ENCODE measurements at regions of chr1 and their contacts with region 1.

Region 1: GRCh38 chr1:17439250-17440073 is at the start of gene RCC2:
- DNase-seq: no peak
- H3K4me3 ChIP-seq: peak within 1 kb of the TSS; percentile 72
- CTCF ChIP-seq: no peak

Region 2: DNA sequence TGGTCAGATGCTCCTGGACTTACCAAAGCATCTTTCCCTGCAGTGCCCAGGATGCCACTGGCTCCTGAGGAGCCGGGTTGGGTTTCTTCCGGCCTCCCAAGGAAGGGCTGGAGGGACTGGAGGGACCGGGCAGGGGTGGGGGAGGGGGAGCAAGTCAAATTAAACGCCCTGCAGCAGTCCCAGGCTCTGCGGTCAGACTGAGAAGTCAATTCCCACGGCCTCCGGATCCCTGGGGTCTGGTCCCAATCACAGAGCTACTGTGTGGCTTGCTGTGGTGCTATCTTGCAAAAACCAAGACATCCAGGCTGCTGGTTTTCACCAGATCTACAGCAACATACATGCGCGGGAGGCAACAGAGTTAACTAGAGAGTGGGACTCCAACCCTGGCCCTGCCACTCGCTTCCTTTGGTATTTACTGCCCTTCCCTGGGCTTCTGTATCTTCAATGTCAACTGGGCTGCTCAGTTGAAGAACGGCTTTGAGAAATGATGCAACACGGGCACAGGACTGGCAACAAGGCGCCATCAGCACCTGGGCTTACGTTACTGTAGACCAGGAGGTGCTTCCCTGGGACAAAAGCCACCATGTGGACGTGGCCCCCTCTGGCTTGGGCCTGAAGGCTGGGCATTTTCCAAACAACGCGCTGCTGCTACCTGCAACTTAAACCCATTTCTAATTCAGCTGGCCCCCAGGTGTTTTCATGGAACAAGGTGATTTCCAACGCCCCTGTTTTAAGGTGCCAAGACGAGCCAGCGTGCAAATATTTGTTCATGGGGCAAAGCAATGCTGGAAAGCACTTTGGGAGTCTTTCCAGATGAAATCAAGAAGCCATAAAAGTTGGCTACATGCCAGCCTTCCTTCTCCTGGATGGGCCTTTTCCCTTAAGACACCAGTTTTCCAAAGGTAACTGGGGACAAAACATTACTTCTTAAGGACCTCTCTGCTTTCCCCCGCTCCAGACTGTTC is 11.5 kb before region 1 on chr1:
- CTCF ChIA-PET with region 1: interaction called, 11 read pairs
- POLR2A ChIA-PET with region 1: interaction called, 3 read pairs
- DNase-seq: no peak
- H3K4me3 ChIP-seq: no peak overlapping the region
- CTCF ChIP-seq: no peak

Region 3: DNA sequence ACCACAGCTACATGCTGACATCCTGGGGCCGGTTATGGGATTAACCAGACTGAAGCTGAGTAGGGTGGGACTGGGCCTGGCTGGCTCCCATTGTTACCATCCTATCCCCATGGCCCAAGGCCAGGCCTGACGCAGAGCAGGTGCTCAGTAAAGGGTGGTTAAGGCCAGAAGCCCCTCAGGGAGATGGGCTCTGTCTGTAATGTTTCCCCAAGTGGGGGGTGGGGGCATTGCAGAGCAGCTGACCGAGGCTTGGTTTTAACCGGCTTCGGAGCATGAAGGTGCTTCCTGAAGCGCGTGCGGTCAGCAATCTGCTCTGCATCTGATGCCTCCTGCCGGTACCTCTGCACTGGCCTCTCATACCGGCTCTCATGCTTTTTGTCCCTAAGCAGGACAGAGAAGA is 232.3 kb after region 1 on chr1:
- CTCF ChIA-PET with region 1: no interaction called
- POLR2A ChIA-PET with region 1: no interaction called
- DNase-seq: no peak
- H3K4me3 ChIP-seq: no peak overlapping the region
- CTCF ChIP-seq: no peak

Region 4: GRCh38 chr1:17732475-17732874 is 293.0 kb after region 1 on chr1:
- CTCF ChIA-PET with region 1: no interaction called
- POLR2A ChIA-PET with region 1: no interaction called
- DNase-seq: peak; percentile 4
- H3K4me3 ChIP-seq: no peak overlapping the region
- CTCF ChIP-seq: no peak

Measured in AG04449 (cell line).